A549 (cell line): ENCODE measurements at regions of chr9 and their contacts with region 1.

Region 1: GRCh38 chr9:37746848-37747753 is 6.5 kb upstream of the TRMT10B start:
- DNase-seq: peak; percentile 72 to 85
- ATAC-seq: peak; percentile 87 to 94
- H3K4me3 ChIP-seq: no peak overlapping the region
- H3K27ac ChIP-seq: no peak overlapping the region
- H3K4me1 ChIP-seq: no peaks in the 10 kb centered on the region
- CTCF ChIP-seq: peak; percentile 87
- EP300 ChIP-seq: no peak
- POLR2A ChIP-seq: no peak
- RAD21 ChIP-seq: peak; percentile 78 to 84

Region 2: DNA sequence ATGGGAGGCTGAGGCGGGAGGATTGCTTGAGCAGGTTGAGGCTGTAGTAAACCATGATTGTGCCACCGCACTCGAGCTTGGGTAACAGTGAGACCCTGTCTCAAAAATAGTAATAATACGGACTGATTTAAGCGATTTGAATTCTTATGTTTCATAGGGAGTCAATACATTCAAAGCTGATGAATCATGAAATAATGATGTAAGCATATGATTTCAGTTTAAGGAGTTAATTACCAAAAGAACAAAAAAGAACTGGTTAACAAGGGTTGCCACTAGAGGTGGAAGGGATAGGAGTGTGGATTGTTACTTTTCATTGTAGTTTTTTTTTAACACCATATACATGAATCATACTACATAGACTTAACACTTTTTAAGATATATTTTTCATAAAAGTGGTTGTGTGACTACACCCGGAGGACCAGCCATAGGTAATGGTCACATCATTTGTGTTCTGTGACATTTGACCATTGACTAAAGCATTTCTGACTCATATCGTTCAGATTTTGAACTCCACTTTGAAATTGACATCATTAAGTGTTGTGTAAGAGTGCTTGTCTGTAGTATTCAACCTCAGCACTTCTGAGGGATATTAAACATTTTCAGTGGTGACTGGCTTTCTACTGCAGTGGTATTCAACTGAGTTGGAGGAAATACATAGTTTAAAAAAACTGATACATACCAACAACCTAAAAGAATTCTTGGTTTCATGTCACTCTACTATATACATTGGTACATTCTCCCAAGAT is 13.5 kb after region 1 on chr9:
- CTCF ChIA-PET with region 1: interaction called, 11 read pairs
- POLR2A ChIA-PET with region 1: no interaction called
- DNase-seq: no peak
- ATAC-seq: 0 out of 6 replicates have a peak, but pooled peaks of 1 of the 2 experiments have one; percentile 39
- H3K4me3 ChIP-seq: no peak overlapping the region
- H3K27ac ChIP-seq: no peak overlapping the region
- H3K4me1 ChIP-seq: peaks cover 18% of the 10 kb centered on the region
- CTCF ChIP-seq: no peak
- EP300 ChIP-seq: no peak
- POLR2A ChIP-seq: no peak
- RAD21 ChIP-seq: no peak

Region 3: GRCh38 chr9:38284588-38285051 is 537.5 kb after region 1 on chr9:
- CTCF ChIA-PET with region 1: no interaction called
- POLR2A ChIA-PET with region 1: no interaction called
- DNase-seq: no peak
- ATAC-seq: no peak
- H3K4me3 ChIP-seq: no peak overlapping the region
- H3K27ac ChIP-seq: no peak overlapping the region
- H3K4me1 ChIP-seq: no peaks in the 10 kb centered on the region
- CTCF ChIP-seq: no peak
- EP300 ChIP-seq: no peak
- POLR2A ChIP-seq: no peak
- RAD21 ChIP-seq: no peak